Right ventricle myocardium inferior (tissue), 1 donor: ENCODE measurements at regions of chr14 and their contacts with region 1.

Region 1: GRCh38 chr14:60002819-60003492 is 83.0 kb downstream of the LRRC9 start:
- DNase-seq: peak; percentile 81
- ATAC-seq: peak; percentile 99

Region 2: GRCh38 chr14:60091550-60092530 is 88.9 kb after region 1 on chr14 and contains the start of gene PCNX4:
- intact Hi-C with region 1: loop called (anchors 5 kb)
- DNase-seq: peak; percentile 97
- ATAC-seq: peak; percentile 98
- total RNA-seq, gene PCNX4: 23.5 TPM